GM12878 (cell line): ENCODE measurements at regions of chr10 and their contacts with region 1.

Region 1: GRCh38 chr10:51773681-51774080 is 74.3 kb upstream of the CSTF2T start:
- DNase-seq: no peak
- ATAC-seq: no peak
- H3K4me3 ChIP-seq: no peak overlapping the region
- H3K27ac ChIP-seq: no peak overlapping the region
- H3K4me1 ChIP-seq: no peaks in the 10 kb centered on the region
- H3K27me3 ChIP-seq: no peaks in the 10 kb centered on the region
- CTCF ChIP-seq: no peak
- EP300 ChIP-seq: no peak
- POLR2A ChIP-seq: no peak
- RAD21 ChIP-seq: no peak

Region 2: DNA sequence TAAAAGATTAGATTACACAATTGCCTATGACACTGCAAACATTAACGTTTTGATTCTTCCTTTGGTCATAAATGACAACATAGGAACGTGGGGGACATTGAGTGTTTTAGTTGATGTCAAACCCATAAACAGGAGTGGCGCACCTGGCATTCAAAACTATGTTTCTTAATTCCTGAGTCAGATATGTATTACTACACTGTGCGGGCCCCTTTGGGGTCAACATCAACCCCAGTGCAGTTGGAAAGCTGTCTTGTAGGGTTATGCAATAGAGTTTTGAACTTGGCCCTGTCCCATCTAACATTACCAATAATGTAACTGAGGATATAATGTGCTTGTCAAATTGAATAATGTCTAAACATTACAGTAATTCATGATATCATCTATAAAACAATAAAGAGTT is 230.8 kb before region 1 on chr10:
- CTCF ChIA-PET with region 1: no interaction called
- POLR2A ChIA-PET with region 1: no interaction called
- RAD21 ChIA-PET with region 1: no interaction called
- SMC1A ChIA-PET with region 1: no interaction called
- in situ Hi-C with region 1: no loop called
- intact Hi-C with region 1: no loop called
- DNase-seq: no peak
- ATAC-seq: no peak
- H3K4me3 ChIP-seq: no peak overlapping the region
- H3K27ac ChIP-seq: no peak overlapping the region
- H3K4me1 ChIP-seq: no peaks in the 10 kb centered on the region
- H3K27me3 ChIP-seq: no peaks in the 10 kb centered on the region
- CTCF ChIP-seq: no peak
- EP300 ChIP-seq: no peak
- POLR2A ChIP-seq: no peak
- RAD21 ChIP-seq: no peak

Region 3: DNA sequence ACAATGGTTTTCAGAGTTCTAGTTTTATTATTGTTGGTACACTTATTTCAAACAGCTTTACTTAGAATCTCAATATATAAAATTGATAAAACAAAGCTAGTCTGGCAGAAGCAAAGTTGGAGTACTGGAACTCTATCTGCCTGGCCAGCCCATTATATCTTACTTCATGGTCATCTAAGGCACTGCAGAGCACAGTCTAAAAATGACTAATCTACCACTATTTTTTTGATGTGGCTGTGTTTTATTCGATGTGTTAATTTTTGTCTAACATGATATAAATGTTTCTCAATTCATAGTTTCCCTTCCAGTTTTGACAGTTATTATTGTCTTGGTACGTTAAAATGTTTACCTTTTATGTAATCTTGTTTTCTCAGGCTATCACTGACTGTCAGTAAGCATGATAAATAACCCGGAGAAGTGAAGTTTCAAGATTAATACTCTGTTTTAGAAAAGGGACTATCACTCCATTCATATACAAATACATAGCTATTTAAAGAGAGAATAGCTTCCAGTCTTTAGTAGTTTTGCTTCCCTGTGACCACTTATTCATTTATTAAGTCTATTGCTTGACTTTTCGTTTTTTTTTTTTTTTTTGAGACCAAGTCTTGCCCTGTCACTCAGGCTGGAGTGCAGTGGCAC is 13.7 kb before region 1 on chr10:
- CTCF ChIA-PET with region 1: interaction called, 6 read pairs
- POLR2A ChIA-PET with region 1: no interaction called
- RAD21 ChIA-PET with region 1: interaction called, 3 read pairs
- SMC1A ChIA-PET with region 1: interaction called, 10 read pairs
- in situ Hi-C with region 1: no loop called
- intact Hi-C with region 1: no loop called
- DNase-seq: no peak
- ATAC-seq: peak; percentile 74
- H3K4me3 ChIP-seq: no peak overlapping the region
- H3K27ac ChIP-seq: no peak overlapping the region
- H3K4me1 ChIP-seq: no peaks in the 10 kb centered on the region
- H3K27me3 ChIP-seq: no peaks in the 10 kb centered on the region
- CTCF ChIP-seq: no peak
- EP300 ChIP-seq: no peak
- POLR2A ChIP-seq: no peak
- RAD21 ChIP-seq: no peak

Region 4: DNA sequence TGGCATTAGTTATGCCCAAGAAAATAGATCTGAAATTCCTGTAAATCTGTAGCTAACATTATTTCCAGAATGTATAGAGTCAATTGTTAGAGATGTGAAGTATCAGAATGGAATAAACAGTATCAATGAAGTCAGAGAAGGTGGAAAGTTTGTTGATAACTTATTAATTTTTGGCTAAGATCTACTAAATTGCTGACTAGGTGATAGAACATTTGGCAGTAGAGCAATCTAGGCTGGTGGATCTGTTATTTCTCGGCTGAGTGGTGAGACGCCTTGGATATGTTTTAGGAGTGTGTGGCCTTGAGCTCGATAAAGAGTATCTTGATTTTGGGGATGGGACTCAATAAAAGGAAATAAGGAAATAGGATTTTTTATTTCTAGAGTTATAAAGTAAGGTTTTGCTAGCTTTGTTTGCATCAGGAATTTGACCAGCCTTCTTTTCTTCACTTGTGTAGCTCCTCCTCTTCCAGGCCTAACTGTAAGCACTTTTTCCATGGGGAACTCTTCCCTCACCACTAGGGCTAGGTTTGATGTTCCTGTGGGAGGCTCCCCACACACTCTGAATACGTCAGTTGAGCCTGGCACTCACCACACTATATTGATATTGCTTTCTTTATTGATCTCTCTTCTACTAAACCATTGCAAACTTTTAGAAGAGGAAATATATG is 12.5 kb after region 1 on chr10:
- CTCF ChIA-PET with region 1: interaction called, 11 read pairs
- POLR2A ChIA-PET with region 1: no interaction called
- RAD21 ChIA-PET with region 1: interaction called, 3 read pairs
- SMC1A ChIA-PET with region 1: interaction called, 3 read pairs
- in situ Hi-C with region 1: no loop called
- intact Hi-C with region 1: no loop called
- DNase-seq: no peak
- ATAC-seq: no peak
- H3K4me3 ChIP-seq: no peak overlapping the region
- H3K27ac ChIP-seq: no peak overlapping the region
- H3K4me1 ChIP-seq: no peaks in the 10 kb centered on the region
- H3K27me3 ChIP-seq: no peaks in the 10 kb centered on the region
- CTCF ChIP-seq: no peak
- EP300 ChIP-seq: no peak
- POLR2A ChIP-seq: no peak
- RAD21 ChIP-seq: no peak

Region 5: GRCh38 chr10:51815723-51816122 is 42.0 kb after region 1 on chr10:
- CTCF ChIA-PET with region 1: no interaction called
- POLR2A ChIA-PET with region 1: no interaction called
- RAD21 ChIA-PET with region 1: no interaction called
- SMC1A ChIA-PET with region 1: no interaction called
- in situ Hi-C with region 1: no loop called
- intact Hi-C with region 1: no loop called
- DNase-seq: no peak
- ATAC-seq: no peak
- H3K4me3 ChIP-seq: no peak overlapping the region
- H3K27ac ChIP-seq: no peak overlapping the region
- H3K4me1 ChIP-seq: no peaks in the 10 kb centered on the region
- H3K27me3 ChIP-seq: no peaks in the 10 kb centered on the region
- CTCF ChIP-seq: no peak
- EP300 ChIP-seq: no peak
- POLR2A ChIP-seq: no peak
- RAD21 ChIP-seq: no peak

Region 6: GRCh38 chr10:51832652-51833383 is 59.1 kb after region 1 on chr10:
- CTCF ChIA-PET with region 1: no interaction called
- POLR2A ChIA-PET with region 1: no interaction called
- RAD21 ChIA-PET with region 1: no interaction called
- SMC1A ChIA-PET with region 1: no interaction called
- in situ Hi-C with region 1: no loop called
- intact Hi-C with region 1: no loop called
- DNase-seq: peak; percentile 8
- ATAC-seq: peak; percentile 78
- H3K4me3 ChIP-seq: no peak overlapping the region
- H3K27ac ChIP-seq: no peak overlapping the region
- H3K4me1 ChIP-seq: no peaks in the 10 kb centered on the region
- H3K27me3 ChIP-seq: no peaks in the 10 kb centered on the region
- CTCF ChIP-seq: no peak
- EP300 ChIP-seq: no peak
- POLR2A ChIP-seq: no peak
- RAD21 ChIP-seq: no peak

Region 7: GRCh38 chr10:51879238-51879637 is 105.6 kb after region 1 on chr10:
- CTCF ChIA-PET with region 1: no interaction called
- POLR2A ChIA-PET with region 1: no interaction called
- RAD21 ChIA-PET with region 1: no interaction called
- SMC1A ChIA-PET with region 1: no interaction called
- in situ Hi-C with region 1: no loop called
- intact Hi-C with region 1: no loop called
- DNase-seq: peak; percentile 52
- ATAC-seq: peak; percentile 92
- H3K4me3 ChIP-seq: no peak overlapping the region
- H3K27ac ChIP-seq: no peak overlapping the region
- H3K4me1 ChIP-seq: no peaks in the 10 kb centered on the region; the same call in 1 of the 2 replicates
- H3K27me3 ChIP-seq: no peaks in the 10 kb centered on the region
- CTCF ChIP-seq: no peak
- EP300 ChIP-seq: no peak
- POLR2A ChIP-seq: no peak
- RAD21 ChIP-seq: no peak